ENCODE measurements at regions of chr17 and their contacts with region 1.

Region 1: GRCh38 chr17:29369831-29370735 is 20.1 kb upstream of the TAOK1 start:
- DNase-seq: peak; percentile 70
- H3K4me3 Mint-ChIP-seq: no peak overlapping the region
- H3K27ac Mint-ChIP-seq: no peak overlapping the region
- H3K4me1 Mint-ChIP-seq: no peaks in the 10 kb centered on the region
- H3K27me3 Mint-ChIP-seq: no peaks in the 10 kb centered on the region

Region 2: DNA sequence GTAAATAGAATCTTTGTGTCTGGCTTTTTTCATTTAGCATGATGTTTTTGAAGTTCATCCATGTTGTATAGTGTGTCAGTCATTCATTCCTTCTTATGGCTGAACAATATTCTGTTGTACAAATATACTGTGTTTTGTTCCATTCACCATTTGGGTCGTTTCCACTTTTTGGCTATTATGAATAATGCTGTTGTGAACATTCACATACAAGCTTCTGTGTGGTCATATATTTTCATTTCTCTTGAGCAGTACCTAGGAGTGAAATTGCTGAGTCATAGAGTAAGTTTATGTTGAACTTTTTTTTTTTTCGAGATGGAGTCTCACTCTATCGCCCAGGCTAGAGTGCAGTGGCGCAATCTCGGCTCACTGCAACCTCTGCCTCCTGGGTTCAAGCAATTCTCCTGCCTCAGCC is 12.3 kb before region 1 on chr17:
- CTCF ChIA-PET with region 1: interaction called, 29 read pairs
- DNase-seq: no peak
- H3K4me3 Mint-ChIP-seq: no peak overlapping the region
- H3K27ac Mint-ChIP-seq: no peak overlapping the region
- H3K4me1 Mint-ChIP-seq: peaks cover 2% of the 10 kb centered on the region
- H3K27me3 Mint-ChIP-seq: no peaks in the 10 kb centered on the region

Region 3: GRCh38 chr17:29384900-29385299 is 14.8 kb after region 1 on chr17:
- CTCF ChIA-PET with region 1: interaction called, 36 read pairs
- DNase-seq: no peak
- H3K4me3 Mint-ChIP-seq: no peak overlapping the region
- H3K27ac Mint-ChIP-seq: no peak overlapping the region
- H3K4me1 Mint-ChIP-seq: peaks cover 7% of the 10 kb centered on the region
- H3K27me3 Mint-ChIP-seq: no peaks in the 10 kb centered on the region

Region 4: GRCh38 chr17:29533976-29534375 is 163.9 kb after region 1 on chr17:
- CTCF ChIA-PET with region 1: interaction called, 35 read pairs
- DNase-seq: no peak
- H3K4me3 Mint-ChIP-seq: no peak overlapping the region
- H3K27ac Mint-ChIP-seq: peak overlapping the region; percentile 14
- H3K4me1 Mint-ChIP-seq: no peaks in the 10 kb centered on the region
- H3K27me3 Mint-ChIP-seq: no peaks in the 10 kb centered on the region

Region 5: GRCh38 chr17:29568331-29569244 is 198.5 kb after region 1 on chr17 and contains the start of gene TP53I13:
- CTCF ChIA-PET with region 1: interaction called, 14 read pairs
- DNase-seq: peak; percentile 93
- H3K4me3 Mint-ChIP-seq: peak within 1 kb of the TSS; percentile 93
- H3K27ac Mint-ChIP-seq: peak within 1 kb of the TSS; percentile 99
- H3K4me1 Mint-ChIP-seq: peaks cover 40% of the 10 kb centered on the region
- H3K27me3 Mint-ChIP-seq: peaks cover 4% of the 10 kb centered on the region

Region 6: GRCh38 chr17:29589524-29590410 is 219.7 kb after region 1 on chr17 and contains the start of gene GIT1:
- CTCF ChIA-PET with region 1: interaction called, 23 read pairs
- DNase-seq: peak; percentile 87
- H3K4me3 Mint-ChIP-seq: peak within 1 kb of the TSS; percentile 93
- H3K27ac Mint-ChIP-seq: peak within 1 kb of the TSS; percentile 89
- H3K4me1 Mint-ChIP-seq: peaks cover 73% of the 10 kb centered on the region
- H3K27me3 Mint-ChIP-seq: peaks cover 7% of the 10 kb centered on the region

Measured in activated naive CD4-positive, alpha-beta T cell treated with anti-CD3 and anti-CD28 coated beads, Interleukin-2, amount 10 ng/mL, durations not matched to agents 7 days and 5 days (primary cell).